Posterior cingulate gyrus (tissue), 11 donors: ENCODE measurements at regions of chr2 and their contacts with region 1.

Region 1: DNA sequence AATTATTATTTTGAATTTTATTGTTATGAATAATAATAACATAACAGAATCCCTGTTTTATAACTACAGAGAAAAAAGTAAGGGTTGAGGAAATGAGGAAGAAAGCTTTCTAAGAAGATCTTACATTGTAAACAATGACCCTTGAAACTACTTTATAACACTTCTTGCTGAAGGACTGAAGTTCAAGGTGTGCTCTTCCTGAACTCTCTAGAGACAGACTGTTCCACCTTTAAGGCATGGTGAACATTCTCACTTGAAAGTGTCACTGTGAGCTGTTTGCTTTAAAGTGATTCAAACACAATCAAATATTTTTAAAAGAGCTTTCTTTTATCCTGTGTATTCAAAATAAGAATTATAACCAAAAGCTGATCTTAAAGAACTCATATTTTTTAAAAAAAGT is 131.5 kb downstream of the DNAH7 start:
- DNase-seq: no peak

Region 2: DNA sequence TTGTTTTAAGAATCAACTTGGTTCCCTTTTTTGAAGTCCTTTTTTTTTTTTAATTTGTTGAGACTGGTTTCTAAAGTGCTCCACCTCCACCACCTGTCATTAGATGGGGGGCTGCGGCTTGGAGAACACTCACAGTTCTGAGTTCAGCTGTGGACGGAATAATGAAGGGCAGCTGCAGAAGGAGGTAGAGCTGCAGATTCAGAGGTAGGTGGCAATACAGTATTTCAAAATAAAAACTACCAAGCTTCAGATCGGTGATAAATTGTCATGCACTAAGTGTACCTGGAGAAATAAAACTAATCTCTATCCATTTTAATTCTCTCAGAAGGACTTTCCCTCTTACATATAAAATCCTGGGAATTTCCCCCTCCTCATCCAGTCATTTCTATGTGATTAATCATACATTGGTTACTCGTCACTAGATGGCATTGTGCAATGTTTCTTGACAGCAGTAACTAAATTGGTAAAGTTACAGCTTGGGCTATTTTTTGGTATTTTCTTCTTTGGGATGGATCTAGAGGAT is 361.2 kb before region 1 on chr2:
- intact Hi-C with region 1: loop called (anchors 5 kb)
- DNase-seq: no peak

Region 3: DNA sequence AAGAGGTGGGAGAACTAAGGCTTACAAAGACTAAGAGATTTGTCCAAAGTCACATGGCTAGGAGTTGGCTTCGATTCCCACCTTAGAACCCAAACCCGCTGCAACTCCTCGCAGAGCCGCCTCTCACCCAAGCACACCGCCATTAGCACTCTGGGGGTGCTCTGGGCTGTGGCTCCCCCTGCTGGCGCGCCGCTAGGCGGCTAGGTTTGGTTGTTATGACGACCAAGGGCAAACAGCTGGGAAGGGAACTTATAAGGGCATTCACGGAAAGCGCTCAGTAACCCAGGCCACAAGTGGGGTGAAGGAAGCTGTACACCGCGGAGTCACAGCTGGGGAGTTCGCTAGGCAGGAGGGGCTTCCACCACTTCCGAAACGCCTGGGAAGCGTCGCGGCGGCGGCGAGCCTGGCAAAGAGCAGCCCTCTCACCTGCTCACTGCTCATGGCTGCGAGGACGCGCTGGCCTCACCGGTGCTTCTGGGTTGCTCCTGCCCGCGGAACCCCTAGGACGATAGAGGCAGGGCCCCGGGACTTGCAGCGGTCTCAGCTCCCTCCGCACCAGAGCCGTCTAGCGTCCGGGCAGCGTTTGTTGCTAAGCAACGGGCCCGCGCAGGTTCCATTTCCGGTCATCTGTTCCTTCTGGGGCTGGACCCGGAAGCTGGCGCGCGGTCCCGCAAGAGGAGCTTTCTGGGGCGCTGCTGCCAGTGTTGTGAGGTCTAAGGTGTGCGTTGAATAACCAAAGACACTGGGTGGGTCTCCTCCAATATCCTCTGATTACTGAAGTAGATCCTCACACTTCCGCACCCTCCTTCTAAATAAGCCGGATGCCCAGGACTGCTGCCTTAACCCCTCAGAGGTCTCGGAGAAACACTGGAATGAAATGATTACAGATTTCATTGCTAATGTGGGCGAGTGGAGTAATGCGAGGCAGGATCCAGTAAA is 131.4 kb after region 1 on chr2 and contains the start of gene DNAH7:
- intact Hi-C with region 1: no loop called
- DNase-seq: peak; percentile 83 to 98 (median 88)